B cell (primary cell): ENCODE measurements at regions of chr18 and their contacts with region 1.

Region 1: DNA sequence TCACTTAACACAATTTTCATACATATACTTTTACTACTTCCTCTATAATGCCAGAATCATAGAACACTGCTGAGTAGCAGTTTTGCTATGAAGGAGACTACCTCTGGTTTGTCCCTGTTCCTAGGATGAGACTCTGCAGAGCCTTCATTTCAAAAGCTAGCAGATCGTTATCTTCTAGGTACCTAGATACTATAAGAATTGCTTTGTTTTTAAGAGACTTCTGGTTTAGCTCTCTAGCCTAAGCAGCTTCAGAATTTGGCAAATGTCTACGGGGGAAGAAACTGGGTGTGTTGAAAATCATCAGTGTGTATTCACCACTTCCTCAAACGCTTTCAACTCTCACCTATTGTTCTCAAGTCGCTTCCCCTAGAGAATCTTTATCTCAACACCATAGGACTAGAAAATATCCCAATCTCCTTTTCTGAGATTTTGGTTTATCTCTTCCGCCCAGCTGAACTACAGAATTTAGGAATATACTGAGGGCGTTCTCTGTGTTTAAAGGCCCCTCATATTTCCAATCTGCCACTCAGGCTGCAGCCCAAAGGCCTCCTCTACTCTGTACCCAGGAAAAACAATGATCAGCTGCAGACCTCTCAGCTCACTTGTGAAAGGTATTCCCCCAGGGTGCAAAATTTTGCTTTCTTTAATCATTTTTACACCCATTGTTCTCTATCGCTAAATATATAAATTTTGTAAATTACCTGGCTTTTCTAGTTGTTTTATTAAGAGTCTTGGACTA is 28.7 kb downstream of the SMAD2 start:
- DNase-seq: peak; percentile 67
- ATAC-seq: peak; percentile 81
- H3K4me3 ChIP-seq: peak overlapping the region in 2 of 5 experiments; percentile 25 to 39
- H3K4me3 Mint-ChIP-seq: peak overlapping the region; percentile 64
- H3K27ac ChIP-seq: no peak overlapping the region
- H3K27ac Mint-ChIP-seq: no peak overlapping the region
- H3K4me1 ChIP-seq: peaks cover 14 to 20% of the 10 kb centered on the region in 2 donors
- H3K4me1 Mint-ChIP-seq: peaks cover 34% of the 10 kb centered on the region
- H3K27me3 ChIP-seq: peaks cover 0 to 30% (median 21%) of the 10 kb centered on the region in 4 experiments
- H3K27me3 Mint-ChIP-seq: peaks cover 50% of the 10 kb centered on the region
- CTCF ChIP-seq: no peak

Region 2: GRCh38 chr18:47883771-47884413 is 17.9 kb before region 1 on chr18:
- CTCF ChIA-PET with region 1: interaction called, 3 read pairs
- POLR2A ChIA-PET with region 1: no interaction called
- intact Hi-C with region 1: loop called (anchors 2 kb)
- DNase-seq: no peak
- ATAC-seq: no peak
- H3K4me3 ChIP-seq: no peak overlapping the region
- H3K4me3 Mint-ChIP-seq: no peak overlapping the region
- H3K27ac ChIP-seq: no peak overlapping the region
- H3K27ac Mint-ChIP-seq: no peak overlapping the region
- H3K4me1 ChIP-seq: no peaks in the 10 kb centered on the region
- H3K4me1 Mint-ChIP-seq: peaks cover under 1% of the 10 kb centered on the region
- H3K27me3 ChIP-seq: no peaks in the 10 kb centered on the region
- H3K27me3 Mint-ChIP-seq: no peaks in the 10 kb centered on the region
- CTCF ChIP-seq: no peak